PC-9 (cell line): ENCODE measurements at regions of chr19 and their contacts with region 1.

Region 1: DNA sequence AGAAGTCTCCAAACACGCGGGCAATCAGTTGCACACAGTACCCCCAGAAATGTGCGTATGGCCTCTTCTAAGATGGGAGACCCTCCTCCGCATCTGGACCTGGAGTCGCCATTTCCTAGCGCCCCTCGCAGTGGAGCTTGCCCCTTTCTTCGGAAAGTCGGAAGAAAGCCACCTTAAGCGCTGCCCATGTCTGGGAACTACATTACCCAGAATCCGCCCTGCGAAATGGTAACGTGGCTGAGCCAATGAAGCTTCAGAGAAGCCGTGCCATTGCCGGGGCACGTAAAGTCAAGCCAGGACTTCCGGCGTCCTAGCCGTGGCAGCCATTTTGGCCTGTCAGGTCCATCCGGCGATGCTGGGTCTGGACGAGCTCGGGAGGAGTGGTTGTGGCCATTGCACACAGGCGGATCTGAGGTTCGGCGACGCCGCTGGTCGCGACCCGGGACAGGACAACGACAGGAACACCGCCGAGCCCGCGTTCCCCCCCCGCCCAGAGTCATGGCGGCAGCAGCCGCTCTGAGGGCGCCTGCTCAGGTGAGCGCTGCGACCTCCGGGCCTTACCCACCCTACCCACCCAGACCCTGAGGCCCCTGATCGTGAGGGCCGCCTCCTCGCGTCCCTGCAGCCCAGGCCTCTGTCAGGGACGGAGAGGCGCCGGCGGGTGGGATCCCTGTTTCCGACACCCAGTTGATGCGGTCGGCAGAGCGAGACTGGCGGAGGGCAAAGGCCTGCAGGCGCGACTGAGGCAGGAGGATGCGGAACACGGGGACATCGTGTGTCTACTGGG is at the start of gene ZNF586:
- DNase-seq: peak; percentile 85 to 90
- H3K4me3 ChIP-seq: peak within 1 kb of the TSS; percentile 78
- H3K27ac ChIP-seq: no peak within 1 kb of the TSS
- H3K4me1 ChIP-seq: peaks cover 7% of the 10 kb centered on the region; the same call in 1 of the 2 replicates
- H3K27me3 ChIP-seq: no peaks in the 10 kb centered on the region
- CTCF ChIP-seq: no peak
- total RNA-seq, gene ZNF586: 19.0 and 21.3 TPM in 2 replicates

Region 2: GRCh38 chr19:57719901-57720519 is 49.5 kb before region 1 on chr19:
- CTCF ChIA-PET with region 1: no interaction called
- POLR2A ChIA-PET with region 1: no interaction called
- intact Hi-C with region 1: no loop called
- DNase-seq: no peak
- H3K4me3 ChIP-seq: no peak overlapping the region
- H3K27ac ChIP-seq: no peak overlapping the region
- H3K4me1 ChIP-seq: no peaks in the 10 kb centered on the region
- H3K27me3 ChIP-seq: no peaks in the 10 kb centered on the region
- CTCF ChIP-seq: no peak

Region 3: GRCh38 chr19:57803594-57804325 is 34.2 kb after region 1 on chr19:
- CTCF ChIA-PET with region 1: no interaction called
- POLR2A ChIA-PET with region 1: interaction called, 10 read pairs
- intact Hi-C with region 1: no loop called
- DNase-seq: peak; percentile 53 to 64
- H3K4me3 ChIP-seq: peak overlapping the region; percentile 61
- H3K27ac ChIP-seq: peak overlapping the region; percentile 61
- H3K4me1 ChIP-seq: peaks cover 30% of the 10 kb centered on the region
- H3K27me3 ChIP-seq: no peaks in the 10 kb centered on the region
- CTCF ChIP-seq: no peak

Region 4: DNA sequence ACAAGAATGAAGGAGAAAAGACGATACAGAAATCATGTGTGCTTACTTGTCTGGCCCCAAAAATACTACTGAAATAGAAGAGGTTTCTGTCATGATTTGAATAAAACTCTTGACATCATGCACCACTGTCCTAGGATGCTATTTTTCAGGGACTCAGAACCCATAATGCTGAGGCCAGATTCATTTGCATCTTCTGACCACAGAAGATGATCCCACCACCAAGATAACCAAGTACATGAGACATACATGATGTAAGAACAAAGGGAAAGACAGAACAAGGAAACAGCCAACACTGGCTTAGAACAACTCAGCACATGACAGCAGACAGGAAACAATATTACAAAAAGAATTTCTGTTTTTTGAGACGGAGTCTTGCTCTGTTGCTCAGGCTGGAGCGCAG is 42.7 kb after region 1 on chr19:
- CTCF ChIA-PET with region 1: no interaction called
- POLR2A ChIA-PET with region 1: interaction called, 11 read pairs
- intact Hi-C with region 1: loop called (anchors 1 kb)
- DNase-seq: no peak
- H3K4me3 ChIP-seq: no peak overlapping the region
- H3K27ac ChIP-seq: no peak overlapping the region
- H3K4me1 ChIP-seq: peaks cover 14% of the 10 kb centered on the region
- H3K27me3 ChIP-seq: no peaks in the 10 kb centered on the region
- CTCF ChIP-seq: no peak